ENCODE measurements at regions of chr3 and their contacts with region 1.

Region 1: GRCh38 chr3:50184242-50184978 is 7.0 kb upstream of the GNAT1 start:
- DNase-seq: no peak
- H3K4me3 ChIP-seq: no peak overlapping the region
- H3K27ac ChIP-seq: no peak overlapping the region
- H3K4me1 ChIP-seq: peaks cover 0 to 7% (median 1%) of the 10 kb centered on the region in 4 donors
- H3K27me3 ChIP-seq: no peaks in the 10 kb centered on the region
- CTCF ChIP-seq: no peak
- EP300 ChIP-seq: no peak
- POLR2A ChIP-seq: no peak

Region 2: DNA sequence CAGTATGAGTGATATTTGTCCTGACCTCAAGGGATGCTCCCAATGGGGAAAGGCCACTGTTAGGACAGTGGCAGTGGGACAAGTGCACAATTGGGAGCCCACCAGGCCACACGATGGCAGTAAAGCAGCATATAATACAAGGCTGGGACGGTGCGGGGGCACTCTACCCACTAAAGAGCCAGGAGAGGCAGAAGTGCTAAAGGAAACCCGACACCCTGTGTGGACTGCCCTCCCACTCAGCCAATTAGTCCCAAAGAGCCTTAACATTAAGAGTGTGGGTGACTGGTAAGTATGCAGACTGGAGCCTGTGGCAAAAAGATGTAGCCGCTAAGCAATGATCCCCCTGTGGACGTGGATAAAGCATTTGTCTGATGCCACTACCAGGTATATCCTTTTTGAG is 1951.7 kb before region 1 on chr3:
- in situ Hi-C with region 1: no loop called
- intact Hi-C with region 1: no loop called
- DNase-seq: peak; percentile 70
- H3K4me3 ChIP-seq: no peak overlapping the region
- H3K27ac ChIP-seq: no peak overlapping the region
- H3K4me1 ChIP-seq: peaks cover 0 to 14% (median 0%) of the 10 kb centered on the region in 4 donors
- H3K27me3 ChIP-seq: no peaks in the 10 kb centered on the region
- CTCF ChIP-seq: peak; percentile 15 to 39 (median 33)
- EP300 ChIP-seq: no peak
- POLR2A ChIP-seq: no peak

Region 3: DNA sequence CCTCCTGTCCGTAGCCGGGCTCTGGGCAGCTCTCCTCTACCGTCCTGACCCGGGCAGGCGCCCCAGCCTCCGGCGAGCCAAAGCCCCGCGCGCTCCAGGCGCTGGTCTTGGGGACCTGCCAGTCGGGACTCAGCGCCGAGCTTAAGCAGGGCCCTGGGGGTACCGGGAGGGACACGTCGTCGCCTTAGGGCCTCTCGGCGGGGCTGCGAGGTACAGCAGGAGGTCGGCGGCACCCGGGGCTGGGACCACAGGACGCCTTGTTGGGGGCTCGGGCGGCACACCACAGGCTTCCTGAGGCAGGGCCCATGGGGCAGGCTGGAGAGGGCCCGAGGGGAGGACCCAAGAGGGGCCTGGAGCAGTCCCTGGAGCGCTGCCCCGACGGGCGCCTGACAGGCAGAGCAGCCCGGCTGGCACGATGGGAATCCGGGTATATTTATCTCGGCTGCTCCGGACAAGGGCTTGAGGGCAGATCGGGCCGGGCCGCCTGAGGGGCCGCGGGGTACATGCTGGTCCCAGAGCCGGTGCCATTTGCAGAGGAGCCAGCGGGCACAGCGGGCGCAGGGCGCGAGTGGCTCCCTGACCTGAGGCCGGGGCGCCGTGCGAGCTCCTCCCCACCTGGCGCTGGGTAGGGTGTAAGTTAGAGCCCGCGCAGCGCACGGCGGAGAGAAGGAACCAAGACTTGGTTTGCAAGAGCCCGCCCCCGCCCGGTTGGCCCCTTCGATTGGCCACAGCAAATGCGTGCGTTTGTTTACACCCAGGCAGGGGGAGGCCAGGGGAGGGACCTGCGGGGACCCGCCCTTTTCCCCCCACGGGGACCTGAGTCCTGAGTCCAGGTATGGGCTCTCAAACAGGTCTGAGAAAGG is 21.2 kb after region 1 on chr3:
- in situ Hi-C with region 1: no loop called
- intact Hi-C with region 1: loop called (anchors 1 kb)
- DNase-seq: peak; percentile 26
- H3K4me3 ChIP-seq: peak overlapping the region in 3 of 4 donors; percentile 4 to 42 (median 30)
- H3K27ac ChIP-seq: no peak overlapping the region
- H3K4me1 ChIP-seq: peaks cover 10 to 14% (median 12%) of the 10 kb centered on the region in 4 donors
- H3K27me3 ChIP-seq: peaks cover 66% of the 10 kb centered on the region
- CTCF ChIP-seq: no peak
- EP300 ChIP-seq: no peak
- POLR2A ChIP-seq: no peak